ENCODE measurements at regions of chr1 and their contacts with region 1.

Region 1: DNA sequence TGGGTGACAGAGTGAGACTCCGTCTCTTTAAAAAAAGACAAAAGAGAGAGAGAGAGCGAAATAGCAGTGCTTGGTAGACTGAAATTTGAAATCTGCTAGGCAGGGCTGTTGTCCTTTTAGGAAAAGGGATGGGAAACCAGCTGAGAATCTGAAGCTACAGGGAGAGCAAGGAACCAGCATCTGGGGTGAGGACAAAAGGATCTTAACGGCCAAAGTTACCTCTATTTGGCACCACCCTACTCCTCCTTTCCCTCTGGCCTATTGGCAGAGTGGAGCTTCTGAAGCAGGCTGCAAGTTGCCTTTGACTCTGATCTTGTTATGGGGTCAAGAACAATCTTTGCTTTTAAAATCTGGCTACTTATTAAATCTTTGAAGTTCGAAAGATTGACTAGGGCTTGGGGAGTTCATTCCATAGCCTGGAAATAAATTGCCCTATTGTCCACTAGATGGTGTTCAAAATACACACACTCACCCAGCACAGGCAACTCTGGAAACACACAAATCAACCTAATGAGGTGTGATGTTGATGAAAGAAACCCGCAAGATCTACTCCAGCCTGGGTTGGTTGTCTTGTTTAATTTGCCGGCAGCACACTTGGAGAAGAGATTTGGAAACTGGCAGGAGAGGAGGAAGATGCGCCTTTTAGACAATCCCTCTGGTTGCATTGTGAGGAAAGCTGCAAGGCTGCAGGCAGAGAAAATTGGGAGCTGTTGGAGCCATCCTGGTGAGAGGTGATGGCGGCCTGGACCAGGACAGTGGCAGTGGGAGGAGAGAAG is 16.5 kb upstream of the PARP1 start:
- DNase-seq: no peak
- ATAC-seq: peak; percentile 53
- H3K4me3 Mint-ChIP-seq: no peak overlapping the region
- H3K27ac Mint-ChIP-seq: peak overlapping the region; percentile 35
- H3K4me1 Mint-ChIP-seq: peaks cover 21% of the 10 kb centered on the region
- H3K27me3 Mint-ChIP-seq: no peaks in the 10 kb centered on the region
- CTCF ChIP-seq: no peak

Region 2: DNA sequence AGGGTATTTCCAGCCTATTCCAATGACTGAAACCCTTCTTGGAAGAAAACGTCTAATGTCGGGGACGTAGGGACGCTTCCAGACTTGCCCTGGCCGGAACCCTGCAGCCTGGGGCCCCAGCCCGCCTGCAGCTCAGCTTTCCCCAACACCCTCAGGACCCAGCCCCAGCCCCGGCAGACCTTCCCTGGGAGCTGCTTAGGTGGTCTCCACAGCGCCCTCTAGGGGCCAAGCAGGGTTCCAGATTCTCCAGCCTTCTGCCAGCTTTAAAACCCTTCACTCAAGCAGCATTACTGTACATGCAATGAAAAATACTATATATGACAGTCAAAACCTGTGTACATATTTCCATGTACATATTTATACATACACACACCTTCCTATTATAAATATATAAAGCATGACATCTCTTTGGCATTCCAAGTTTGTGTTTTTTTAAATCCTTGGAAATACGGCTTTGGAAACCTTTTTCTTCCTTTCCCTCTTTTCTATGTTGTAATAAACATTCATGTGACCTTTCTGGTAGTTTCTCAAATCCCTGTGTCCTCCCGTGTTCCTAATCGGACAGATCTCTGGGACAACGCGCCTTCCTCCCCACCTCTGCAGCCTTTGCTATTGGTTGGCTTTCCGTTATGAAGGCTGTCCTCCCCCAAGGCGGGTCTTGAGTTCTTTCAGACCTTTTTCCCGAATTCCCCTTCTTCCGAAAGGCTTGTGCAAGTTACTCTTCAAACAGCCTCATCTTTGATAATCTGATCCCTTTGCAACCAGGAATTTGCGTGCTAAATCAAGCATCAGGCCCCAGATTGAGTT is 184.5 kb after region 1 on chr1:
- CTCF ChIA-PET with region 1: interaction called, 4 read pairs
- POLR2A ChIA-PET with region 1: no interaction called
- intact Hi-C with region 1: loop called (anchors 1 kb)
- DNase-seq: peak; percentile 55
- ATAC-seq: peak; percentile 61
- H3K4me3 Mint-ChIP-seq: no peak overlapping the region
- H3K27ac Mint-ChIP-seq: no peak overlapping the region
- H3K4me1 Mint-ChIP-seq: no peaks in the 10 kb centered on the region
- H3K27me3 Mint-ChIP-seq: peaks cover 5% of the 10 kb centered on the region
- CTCF ChIP-seq: peak; percentile 39

Region 3: GRCh38 chr1:226634166-226634588 is 209.8 kb after region 1 on chr1:
- CTCF ChIA-PET with region 1: no interaction called
- POLR2A ChIA-PET with region 1: no interaction called
- intact Hi-C with region 1: no loop called
- DNase-seq: peak; percentile 81
- ATAC-seq: peak; percentile 72
- H3K4me3 Mint-ChIP-seq: no peak overlapping the region
- H3K27ac Mint-ChIP-seq: peak overlapping the region; percentile 60
- H3K4me1 Mint-ChIP-seq: peaks cover 72% of the 10 kb centered on the region
- H3K27me3 Mint-ChIP-seq: no peaks in the 10 kb centered on the region
- CTCF ChIP-seq: peak; percentile 56

Region 4: GRCh38 chr1:227185291-227185690 is 760.9 kb after region 1 on chr1:
- CTCF ChIA-PET with region 1: no interaction called
- POLR2A ChIA-PET with region 1: no interaction called
- intact Hi-C with region 1: no loop called
- DNase-seq: no peak
- ATAC-seq: no peak
- H3K4me3 Mint-ChIP-seq: no peak overlapping the region
- H3K27ac Mint-ChIP-seq: no peak overlapping the region
- H3K4me1 Mint-ChIP-seq: no peaks in the 10 kb centered on the region
- H3K27me3 Mint-ChIP-seq: peaks cover 5% of the 10 kb centered on the region
- CTCF ChIP-seq: no peak

Region 5: DNA sequence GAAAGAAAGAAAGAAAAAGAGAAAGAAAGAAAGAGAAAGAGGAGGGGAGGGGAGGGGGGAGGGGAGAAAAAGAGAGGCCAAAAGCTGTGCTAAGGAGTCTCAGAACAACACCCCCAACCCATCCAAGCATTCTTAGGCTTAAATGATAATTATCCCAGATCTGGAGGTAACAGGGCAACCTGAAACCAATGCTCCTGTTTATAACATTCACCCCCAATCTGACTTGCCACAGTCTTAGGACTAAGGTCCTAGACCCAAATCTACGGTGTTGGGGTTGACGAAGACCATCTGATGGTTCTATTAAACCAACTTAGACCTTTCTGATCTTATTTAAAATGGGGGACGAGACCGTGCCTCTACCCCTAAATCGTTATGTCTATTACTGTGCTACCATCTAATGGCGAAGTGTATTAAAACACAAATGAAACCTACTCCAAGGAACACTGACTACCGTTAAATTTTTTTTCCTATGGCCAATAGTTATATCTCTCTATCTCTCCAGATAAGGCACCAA is 1013.1 kb after region 1 on chr1:
- CTCF ChIA-PET with region 1: no interaction called
- POLR2A ChIA-PET with region 1: no interaction called
- intact Hi-C with region 1: loop called (anchors 5 kb)
- DNase-seq: no peak
- ATAC-seq: no peak
- H3K4me3 Mint-ChIP-seq: no peak overlapping the region
- H3K27ac Mint-ChIP-seq: no peak overlapping the region
- H3K4me1 Mint-ChIP-seq: no peaks in the 10 kb centered on the region
- H3K27me3 Mint-ChIP-seq: peaks cover 33% of the 10 kb centered on the region
- CTCF ChIP-seq: no peak

Measured in activated B cell treated with CpG ODN at 0.5 μM for 24 hours (primary cell).